ENCODE measurements at regions of chr10 and their contacts with region 1.

Region 1: DNA sequence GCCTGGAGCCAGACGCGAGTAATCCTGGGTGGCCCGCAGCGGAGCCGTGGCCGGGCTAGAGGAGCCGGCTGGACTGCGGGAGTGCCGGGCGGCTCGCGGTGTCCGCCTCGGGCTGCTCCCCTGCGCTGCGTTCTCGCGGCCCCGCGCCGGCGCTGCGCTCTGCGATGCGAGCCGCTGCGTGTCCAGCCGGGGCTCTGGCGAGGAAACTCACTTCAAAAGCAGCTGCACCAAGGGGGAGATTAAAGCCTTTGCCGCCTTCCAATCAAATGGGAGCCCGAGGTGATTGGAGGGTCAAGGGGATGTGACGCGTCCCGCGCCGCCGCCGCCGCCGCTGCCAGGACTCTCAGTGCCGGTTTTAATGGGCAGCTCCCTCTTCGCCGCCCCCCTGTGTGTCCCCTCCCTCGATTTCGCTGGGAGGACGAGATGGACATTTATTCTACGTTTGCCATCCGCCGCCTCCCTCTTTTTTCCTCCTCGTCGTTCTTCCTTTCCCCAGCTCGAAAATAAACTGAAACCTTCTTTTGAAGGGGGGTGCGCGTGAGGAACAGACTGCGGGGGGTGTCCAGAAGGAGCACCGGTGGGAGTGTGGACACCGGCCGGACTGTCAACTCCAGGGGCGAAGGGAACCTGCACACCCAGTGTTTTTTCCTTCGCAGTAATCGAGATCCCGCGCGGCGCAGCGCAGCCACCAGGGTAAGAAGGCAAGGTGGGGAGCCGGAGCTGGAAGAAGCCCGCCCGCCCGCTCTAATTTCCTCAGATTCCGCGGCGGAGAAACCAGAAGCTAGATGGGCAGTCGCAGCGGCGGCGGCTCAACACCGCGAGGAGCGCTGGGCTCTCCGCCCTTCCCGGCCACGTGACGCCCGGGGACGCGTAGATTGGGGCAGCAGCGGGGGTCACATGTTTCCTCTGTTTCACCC is at the start of gene ZNF503:
- DNase-seq: peak; percentile 98
- ATAC-seq: peak; percentile 80 to 83
- total RNA-seq, gene ZNF503: 12.0 to 14.3 TPM

Region 2: DNA sequence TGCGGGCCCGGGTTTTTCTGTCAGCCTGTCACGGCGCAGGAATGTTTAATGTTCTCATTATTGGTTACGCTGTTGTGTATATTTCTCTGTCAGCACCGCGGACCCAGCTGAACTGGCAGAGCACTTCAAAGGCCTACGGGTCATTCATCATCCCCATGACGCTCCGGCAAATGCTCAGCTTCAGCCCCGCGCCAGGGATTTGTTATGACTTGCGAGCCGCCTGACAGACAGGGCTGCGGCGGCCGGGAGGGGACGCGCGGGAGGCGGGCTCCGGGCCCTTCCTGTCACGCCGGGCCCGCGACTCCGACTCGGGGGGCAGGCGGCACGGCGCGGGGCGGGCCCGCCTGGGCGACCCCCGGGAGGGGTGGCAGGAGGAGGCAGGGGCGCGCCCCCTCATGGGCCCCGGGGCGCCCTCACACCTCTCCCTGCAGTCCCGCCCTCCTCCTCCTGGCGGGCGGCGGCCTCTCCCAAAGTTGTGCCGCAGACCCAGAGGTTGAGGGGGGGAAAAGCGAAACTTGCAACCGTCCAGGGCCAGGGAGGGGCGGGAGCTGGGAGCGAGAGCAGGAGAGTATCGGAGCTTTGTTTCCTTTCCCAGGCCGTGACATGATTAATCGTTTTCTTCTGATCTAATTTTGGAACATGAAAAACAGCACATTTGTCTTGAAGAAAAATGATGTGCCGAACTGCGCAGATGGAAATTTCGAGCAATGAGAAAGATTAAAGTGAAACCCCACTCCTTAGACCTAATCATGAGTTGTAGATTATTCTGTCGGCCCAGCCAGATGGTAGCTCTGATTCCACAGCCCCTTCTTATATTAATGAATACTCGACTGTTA is 106.7 kb before region 1 on chr10:
- intact Hi-C with region 1: loop called in 1 of 2 experiments (anchors 5 kb)
- DNase-seq: peak; percentile 87
- ATAC-seq: peak; percentile 88 to 91

Region 3: GRCh38 chr10:75575940-75576339 is 174.1 kb after region 1 on chr10:
- intact Hi-C with region 1: no loop called
- DNase-seq: no peak
- ATAC-seq: no peak

Region 4: DNA sequence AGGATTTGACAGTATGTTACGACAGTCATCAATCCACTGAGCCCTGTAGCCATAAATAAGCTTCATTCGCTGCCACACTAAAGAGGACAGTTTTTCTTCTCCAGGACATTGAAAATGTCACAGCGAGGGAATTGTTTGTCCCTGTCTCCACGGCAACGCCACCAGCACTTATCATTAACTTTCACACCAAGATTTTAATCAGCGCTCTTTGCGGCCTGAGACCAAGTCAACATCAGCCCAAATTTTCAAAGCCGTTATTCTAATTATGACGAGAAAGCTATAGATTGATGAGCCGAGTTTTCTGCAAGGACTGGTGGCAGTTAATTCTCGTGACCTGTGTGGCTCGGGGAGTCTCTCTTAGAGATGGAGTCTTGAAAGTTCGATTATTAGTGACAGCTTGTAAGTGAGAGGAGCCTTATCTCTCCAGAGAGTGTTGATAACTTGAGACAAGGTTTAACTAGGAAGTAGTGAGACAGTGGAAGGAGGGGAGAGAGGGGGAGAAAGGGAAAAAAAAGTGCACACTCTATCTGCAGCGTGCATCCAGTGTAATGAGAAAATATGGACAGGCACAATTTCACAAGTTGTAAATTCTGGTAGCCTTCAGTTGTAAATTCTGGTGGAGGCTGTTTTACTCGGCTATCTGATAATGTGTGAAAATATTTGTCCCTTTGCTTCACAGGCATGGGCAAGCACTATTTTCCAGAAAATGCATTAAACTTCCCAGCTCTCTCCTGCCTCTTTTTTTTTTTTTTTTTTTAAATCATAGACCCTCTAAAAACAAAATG is 502.9 kb after region 1 on chr10:
- intact Hi-C with region 1: loop called in 1 of 2 experiments (anchors 5 kb)
- DNase-seq: no peak
- ATAC-seq: peak in 1 of 2 donors; percentile 30

Region 5: DNA sequence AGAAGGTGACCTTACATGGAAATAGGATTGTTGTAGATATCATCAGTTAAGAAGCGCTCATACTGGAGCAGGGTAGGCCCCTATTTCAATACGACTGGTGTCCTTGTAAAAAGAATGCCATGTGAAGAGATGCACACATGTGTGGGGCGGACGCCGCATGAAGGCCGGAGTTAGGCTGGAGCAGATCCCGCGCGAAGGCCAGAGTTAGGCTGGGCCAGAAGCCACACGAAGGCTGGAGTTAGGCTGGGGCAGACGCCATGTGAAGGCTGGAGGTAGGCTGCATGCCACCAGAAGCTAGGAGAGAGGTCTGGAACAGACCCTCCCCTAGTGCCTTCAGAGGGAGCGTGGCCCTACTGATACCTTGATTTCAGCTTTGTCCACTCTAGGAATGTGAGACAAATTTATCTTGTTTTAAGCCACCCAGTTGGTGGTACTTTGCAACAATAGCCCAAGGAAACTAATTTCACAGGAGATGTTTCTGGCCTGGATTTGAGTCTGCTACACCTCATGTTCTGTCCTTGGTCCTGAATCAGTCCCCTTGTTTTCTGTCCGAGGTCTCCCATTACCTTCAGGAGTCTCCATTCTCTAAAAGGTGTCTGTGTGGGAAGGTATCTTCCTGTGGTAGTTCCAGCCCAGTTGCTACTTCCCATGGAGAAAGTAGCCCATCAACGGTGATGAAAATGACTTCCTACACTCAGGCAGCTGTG is 615.4 kb after region 1 on chr10:
- intact Hi-C with region 1: no loop called
- DNase-seq: no peak
- ATAC-seq: no peak

Region 6: GRCh38 chr10:76303682-76304316 is 902.0 kb after region 1 on chr10:
- intact Hi-C with region 1: loop called (anchors 2 to 10 kb)
- DNase-seq: peak; percentile 82
- ATAC-seq: peak; percentile 96

Region 7: GRCh38 chr10:76778914-76779795 is 1377.3 kb after region 1 on chr10:
- intact Hi-C with region 1: loop called in 1 of 2 experiments (anchors 10 kb)
- DNase-seq: no peak
- ATAC-seq: no peak

Measured in left cardiac atrium (tissue), 4 donors.